Dorsolateral prefrontal cortex (tissue), 120 donors: ENCODE measurements at regions of chr2 and their contacts with region 1.

Region 1: DNA sequence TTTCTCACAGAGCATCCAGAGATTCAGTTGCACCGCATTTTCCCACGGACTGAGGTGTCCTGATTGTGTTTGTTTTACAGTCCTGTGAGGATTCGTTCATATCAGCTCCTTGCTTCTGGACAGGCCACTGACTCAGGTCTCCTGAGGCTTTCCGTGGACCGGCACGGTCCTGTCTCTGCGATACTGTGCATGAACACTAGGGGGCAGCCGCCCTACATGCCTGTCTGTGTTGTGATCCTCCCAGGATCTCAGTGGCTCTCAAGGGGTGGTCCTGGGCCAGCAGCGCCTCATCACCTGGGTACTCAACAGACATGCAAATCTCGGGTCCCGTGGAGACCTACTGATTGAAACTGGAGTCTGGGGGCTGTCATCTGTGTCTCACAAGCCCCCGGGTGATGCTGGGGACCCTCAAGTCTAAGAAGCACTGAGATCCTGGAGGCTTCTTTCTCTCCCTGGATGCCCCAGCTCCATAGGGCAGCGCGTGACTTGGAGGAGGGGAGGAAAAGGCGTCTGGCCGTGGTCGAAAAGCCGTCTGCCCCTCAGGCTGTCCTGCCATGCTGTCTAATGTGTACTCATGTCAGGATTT is 28.9 kb downstream of the IL1R2 start:
- DNase-seq: peak; percentile 32 to 89 (median 84)
- H3K4me3 ChIP-seq: no peak overlapping the region
- H3K27ac ChIP-seq: no peak overlapping the region
- H3K27me3 ChIP-seq: peaks cover 0 to 9% (median 0%) of the 10 kb centered on the region in 45 donors
- CTCF ChIP-seq: peak; percentile 74 to 100 (median 98)

Region 2: DNA sequence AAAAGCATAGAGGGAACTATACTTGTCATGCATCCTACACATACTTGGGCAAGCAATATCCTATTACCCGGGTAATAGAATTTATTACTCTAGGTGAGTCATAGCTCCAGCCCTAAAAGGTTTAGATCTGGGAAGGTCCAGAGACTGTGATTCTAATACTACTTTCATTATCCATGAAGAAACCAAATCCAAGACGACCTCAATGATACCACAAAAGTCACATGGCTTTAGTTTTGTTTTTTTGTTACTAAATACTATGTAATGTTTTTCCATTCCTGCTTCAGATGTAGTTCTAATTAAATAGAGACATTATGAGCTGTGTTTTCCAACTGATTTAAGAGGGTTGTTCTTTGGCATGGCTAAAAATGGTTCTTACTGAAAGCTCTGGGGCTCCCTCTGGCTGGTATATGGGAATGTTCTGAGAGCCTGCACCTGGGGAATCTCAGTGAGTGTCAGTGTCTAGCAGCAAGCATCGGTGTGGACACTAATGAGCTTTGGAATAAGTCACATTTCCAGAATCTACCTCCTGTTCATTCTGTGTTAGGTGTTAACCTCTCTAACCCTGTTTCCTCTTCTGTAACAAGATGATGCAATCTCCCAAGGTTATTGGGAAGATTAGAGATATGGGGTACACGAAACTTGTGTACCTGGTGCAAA is 145.6 kb after region 1 on chr2:
- intact Hi-C with region 1: loop called in 1 of 2 experiments (anchors 10 kb)
- DNase-seq: no peak
- H3K4me3 ChIP-seq: no peak overlapping the region
- H3K27ac ChIP-seq: no peak overlapping the region
- H3K27me3 ChIP-seq: no peaks in the 10 kb centered on the region
- CTCF ChIP-seq: peak in 55 of 56 donors; percentile 9 to 78 (median 52)

Region 3: GRCh38 chr2:102449370-102449974 is 428.8 kb after region 1 on chr2:
- intact Hi-C with region 1: loop called in 1 of 2 experiments (anchors 5 kb)
- DNase-seq: peak in 7 of 10 donors; percentile 7 to 56 (median 44)
- H3K4me3 ChIP-seq: no peak overlapping the region
- H3K27ac ChIP-seq: no peak overlapping the region
- H3K27me3 ChIP-seq: peaks cover 0 to 3% (median 0%) of the 10 kb centered on the region in 45 donors
- CTCF ChIP-seq: peak; percentile 47 to 83 (median 72)